ENCODE measurements at regions of chr11 and their contacts with region 1.

Region 1: DNA sequence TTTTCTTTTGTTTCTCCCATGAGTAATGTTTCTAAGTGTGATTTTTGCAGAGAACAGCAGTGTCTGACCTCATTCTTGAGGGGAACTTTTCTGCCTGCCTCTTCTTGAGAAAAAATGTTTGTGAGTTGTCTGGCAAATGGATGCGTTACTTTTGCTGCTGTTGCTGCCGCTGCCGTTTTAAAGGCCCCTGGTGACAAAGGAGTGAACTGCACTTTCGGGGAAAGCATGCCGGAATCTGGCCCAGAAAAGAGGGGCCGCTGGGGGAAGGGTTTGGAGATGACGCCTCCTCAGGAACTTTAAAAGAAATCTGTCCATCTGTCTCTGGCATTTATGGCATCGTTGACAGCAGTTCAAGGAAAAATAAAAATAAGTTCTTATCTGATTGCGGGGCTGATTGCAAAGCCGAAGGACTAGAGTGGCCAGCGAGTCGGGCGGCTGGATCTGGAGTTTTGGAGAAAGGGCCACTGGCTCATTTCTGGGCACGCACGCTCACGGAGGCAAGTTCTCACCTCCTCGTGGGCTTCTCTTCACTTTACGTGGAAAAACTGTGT is 16.5 kb downstream of the ZBTB16 start:
- DNase-seq: peak in 3 of 5 donors; percentile 42 to 66 (median 55)
- H3K4me3 ChIP-seq: peak overlapping the region; percentile 5
- H3K27ac ChIP-seq: peak overlapping the region; percentile 10 to 21
- H3K4me1 ChIP-seq: peaks cover 46% of the 10 kb centered on the region
- H3K27me3 ChIP-seq: no peaks in the 10 kb centered on the region
- CTCF ChIP-seq: peak; percentile 44 to 67 (median 47)
- EP300 ChIP-seq: no peak
- POLR2A ChIP-seq: no peak

Region 2: DNA sequence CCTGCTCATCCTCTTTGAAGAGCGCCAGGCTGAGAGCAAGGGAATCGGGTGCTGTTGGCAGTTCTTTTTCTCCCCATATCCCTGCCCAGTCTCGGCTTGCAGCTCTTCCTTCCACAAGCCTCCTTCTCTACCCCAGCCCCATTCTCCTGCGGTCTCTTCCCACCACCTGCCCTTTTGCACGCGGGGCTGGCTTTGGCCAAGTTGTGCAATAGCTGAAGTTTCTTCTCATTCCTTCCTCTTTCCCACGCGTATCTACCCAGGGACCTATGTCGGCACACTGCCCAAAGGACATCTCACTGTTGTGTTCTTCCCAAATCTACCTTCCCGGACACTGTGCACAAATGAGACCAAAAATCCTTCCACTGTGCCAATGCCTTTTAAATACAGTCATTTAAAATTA is 123.4 kb before region 1 on chr11:
- intact Hi-C with region 1: no loop called
- DNase-seq: no peak
- H3K4me3 ChIP-seq: no peak overlapping the region
- H3K27ac ChIP-seq: no peak overlapping the region
- H3K4me1 ChIP-seq: no peaks in the 10 kb centered on the region
- H3K27me3 ChIP-seq: no peaks in the 10 kb centered on the region
- CTCF ChIP-seq: no peak
- EP300 ChIP-seq: no peak
- POLR2A ChIP-seq: no peak

Region 3: DNA sequence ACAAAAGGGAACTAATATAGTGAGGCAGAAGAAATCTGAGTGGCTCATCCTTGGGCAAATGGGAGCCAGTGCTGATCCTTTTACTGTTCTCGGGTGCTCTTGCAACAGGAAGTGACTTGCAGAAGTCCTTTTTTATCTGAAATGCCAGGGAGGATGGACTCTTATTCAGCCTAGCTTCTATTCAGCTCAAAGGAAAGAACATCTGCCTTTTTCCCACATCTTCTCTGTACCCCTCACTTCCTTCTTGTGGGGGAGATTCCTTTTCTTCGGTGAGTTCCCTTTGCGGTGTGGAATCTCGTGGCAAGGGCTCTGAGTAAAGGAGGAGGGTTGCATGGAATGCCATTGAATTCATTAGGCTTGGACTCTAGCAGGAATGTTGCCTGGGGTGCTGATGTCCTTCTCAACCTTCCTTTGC is 59.8 kb after region 1 on chr11:
- intact Hi-C with region 1: loop called in 1 of 4 experiments (anchors 10 kb)
- DNase-seq: no peak
- H3K4me3 ChIP-seq: no peak overlapping the region
- H3K27ac ChIP-seq: no peak overlapping the region
- H3K4me1 ChIP-seq: peaks cover 26% of the 10 kb centered on the region
- H3K27me3 ChIP-seq: no peaks in the 10 kb centered on the region
- CTCF ChIP-seq: no peak
- EP300 ChIP-seq: no peak
- POLR2A ChIP-seq: no peak

Region 4: GRCh38 chr11:114171257-114172054 is 95.5 kb after region 1 on chr11:
- intact Hi-C with region 1: loop called in 1 of 4 experiments (anchors 5 kb)
- DNase-seq: peak; percentile 83 to 95 (median 92)
- H3K4me3 ChIP-seq: no peak overlapping the region
- H3K27ac ChIP-seq: peak overlapping the region; percentile 86 to 89
- H3K4me1 ChIP-seq: peaks cover 66% of the 10 kb centered on the region
- H3K27me3 ChIP-seq: no peaks in the 10 kb centered on the region
- CTCF ChIP-seq: peak in 1 of 3 donors; percentile 7
- EP300 ChIP-seq: peak; percentile 99
- POLR2A ChIP-seq: peak; percentile 37

Region 5: GRCh38 chr11:114307524-114308203 is 231.7 kb after region 1 on chr11:
- intact Hi-C with region 1: no loop called
- DNase-seq: peak in 2 of 5 donors; percentile 21 to 48
- H3K4me3 ChIP-seq: no peak overlapping the region
- H3K27ac ChIP-seq: no peak overlapping the region
- H3K4me1 ChIP-seq: no peaks in the 10 kb centered on the region
- H3K27me3 ChIP-seq: no peaks in the 10 kb centered on the region
- CTCF ChIP-seq: no peak
- EP300 ChIP-seq: no peak
- POLR2A ChIP-seq: no peak

Region 6: DNA sequence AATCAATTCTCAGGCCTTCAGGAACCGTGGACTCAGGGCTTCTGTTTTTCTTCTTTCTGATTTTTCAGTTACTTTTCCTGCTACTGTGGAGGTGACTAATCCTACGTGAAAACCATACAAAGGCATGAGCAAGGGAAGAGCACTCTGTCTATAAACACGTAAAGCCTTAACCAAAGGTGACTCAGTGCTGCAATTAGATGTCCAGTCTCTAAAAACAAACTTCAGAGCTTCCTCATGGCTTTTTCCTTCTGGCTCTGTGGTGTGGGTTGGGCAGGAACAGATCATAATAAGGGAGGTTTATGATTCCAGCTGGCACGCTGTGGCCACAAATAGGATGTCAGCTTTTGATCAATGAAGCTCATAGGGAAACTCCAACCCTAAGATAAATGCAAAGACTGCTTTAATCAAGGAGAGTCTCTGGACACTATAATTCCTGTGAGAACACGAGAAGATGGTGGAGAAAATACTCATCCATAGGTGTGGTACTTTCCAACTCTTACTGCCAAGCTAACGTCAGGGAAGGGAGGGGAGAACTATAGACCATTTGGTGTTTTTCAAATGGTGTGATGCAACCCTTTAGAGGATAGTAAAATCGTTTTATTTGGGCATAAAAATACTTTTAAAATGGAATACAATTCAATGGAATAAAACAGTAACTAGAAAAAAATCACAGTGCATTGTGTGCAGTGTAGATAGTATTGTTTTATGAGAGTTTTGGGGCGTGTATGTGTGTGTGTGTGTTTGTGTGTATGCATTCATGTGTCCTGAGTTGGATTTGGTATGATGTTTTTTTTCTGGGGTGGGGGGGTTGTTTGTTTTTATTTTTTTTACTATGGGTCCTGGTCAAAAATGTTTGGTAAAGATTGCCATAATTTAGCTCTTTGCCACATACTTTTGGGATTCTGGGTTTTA is 602.4 kb after region 1 on chr11 and contains the start of gene NXPE2:
- intact Hi-C with region 1: no loop called
- DNase-seq: no peak
- H3K4me3 ChIP-seq: no peak within 1 kb of the TSS
- H3K27ac ChIP-seq: no peak within 1 kb of the TSS
- H3K4me1 ChIP-seq: no peaks in the 10 kb centered on the region
- H3K27me3 ChIP-seq: no peaks in the 10 kb centered on the region
- CTCF ChIP-seq: no peak
- EP300 ChIP-seq: no peak
- POLR2A ChIP-seq: no peak
- total RNA-seq, gene NXPE2: 0.28 to 1.5 (median 0.55) TPM

Measured in ovary (tissue), 10 donors.